ENCODE measurements at regions of chr4 and their contacts with region 1.

Region 1: DNA sequence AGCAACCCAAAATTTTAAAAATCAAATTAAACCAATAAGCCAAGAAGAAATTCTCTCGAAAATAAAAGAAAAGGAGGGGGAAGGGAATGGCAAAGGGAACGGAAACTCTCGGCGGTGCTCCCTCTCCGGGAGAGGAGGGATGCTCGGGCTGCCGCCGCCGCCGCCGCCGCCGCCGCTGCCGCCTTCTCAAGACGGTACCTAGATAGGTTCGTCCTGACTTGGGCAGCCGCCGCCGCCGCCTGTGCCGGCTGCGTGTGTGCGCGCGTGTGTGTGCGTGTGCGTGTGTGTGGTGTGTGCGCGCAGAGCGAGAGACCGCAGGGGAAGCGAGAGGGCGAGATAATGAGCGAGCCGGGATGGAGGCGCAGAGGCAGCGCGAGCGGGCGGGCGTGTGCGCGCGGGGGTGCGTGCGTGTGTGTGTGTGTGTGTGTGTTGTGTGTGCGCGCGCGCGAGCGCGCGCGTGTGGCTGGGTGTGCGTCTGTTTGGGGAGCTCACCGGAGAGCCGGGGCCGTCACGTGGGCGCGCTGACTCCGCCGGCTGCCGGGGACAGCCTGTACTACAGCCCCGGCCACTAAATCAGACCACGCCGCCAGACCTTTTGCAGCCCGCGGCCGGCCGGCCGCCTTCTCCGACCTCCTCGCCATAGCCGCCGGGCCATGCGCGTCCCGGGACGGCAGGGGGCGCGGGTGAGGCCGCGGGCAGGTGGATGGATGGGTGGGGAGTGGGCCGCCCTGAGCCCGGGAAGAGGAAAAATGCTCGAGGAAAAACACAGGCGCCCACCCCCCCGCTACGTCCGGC is 111.6 kb downstream of the DHX15 start:
- DNase-seq: peak; percentile 76
- H3K4me3 Mint-ChIP-seq: peak overlapping the region; percentile 92
- H3K27ac Mint-ChIP-seq: no peak overlapping the region
- H3K4me1 Mint-ChIP-seq: peaks cover 20% of the 10 kb centered on the region
- H3K27me3 Mint-ChIP-seq: peaks cover 40% of the 10 kb centered on the region
- CTCF ChIP-seq: peak; percentile 76

Region 2: DNA sequence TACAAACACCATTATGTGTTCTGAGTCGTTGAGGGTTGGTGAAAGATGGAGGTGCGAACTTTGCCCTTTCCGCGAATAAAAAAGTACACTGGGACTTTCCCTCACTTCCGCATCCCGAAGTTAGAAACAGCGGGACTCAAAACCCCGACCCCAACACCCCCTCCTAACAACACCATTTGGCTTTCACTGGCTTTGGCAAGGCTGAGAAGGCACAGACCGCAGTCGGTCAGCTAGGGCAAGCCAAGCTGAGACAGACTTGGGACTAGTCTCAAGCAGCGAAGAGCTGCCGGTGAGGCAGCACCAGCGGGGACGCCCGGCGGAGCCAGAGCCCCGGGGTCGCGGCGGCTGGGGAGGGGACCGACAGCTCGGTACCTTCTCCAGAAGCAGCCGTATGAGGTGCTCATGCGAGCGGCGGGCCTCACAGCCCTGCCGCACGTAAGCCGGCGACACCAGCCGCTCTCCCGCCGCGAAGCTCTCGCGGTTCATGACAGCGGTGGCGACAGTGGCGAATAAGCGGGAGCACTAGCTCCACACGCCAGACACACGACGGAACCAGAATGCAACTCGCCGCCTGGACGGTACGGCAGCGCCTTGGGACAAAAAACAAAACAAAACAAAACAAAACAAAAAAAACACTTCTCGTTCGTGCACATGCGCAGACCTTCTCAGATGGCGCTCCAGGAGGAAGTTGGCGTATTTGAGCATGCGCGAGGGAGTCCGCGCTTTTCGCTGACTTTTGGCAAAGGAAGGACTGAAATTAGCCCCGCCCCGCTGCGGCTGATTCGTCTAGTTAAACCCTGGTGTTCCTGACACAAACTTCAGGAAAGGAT is 687.4 kb after region 1 on chr4 and contains the start of gene SEPSECS:
- CTCF ChIA-PET with region 1: no interaction called
- intact Hi-C with region 1: loop called (anchors 10 kb)
- DNase-seq: peak; percentile 91
- H3K4me3 Mint-ChIP-seq: peak within 1 kb of the TSS; percentile 97
- H3K27ac Mint-ChIP-seq: peak within 1 kb of the TSS; percentile 91
- H3K4me1 Mint-ChIP-seq: peaks cover 18% of the 10 kb centered on the region
- H3K27me3 Mint-ChIP-seq: no peaks in the 10 kb centered on the region
- CTCF ChIP-seq: no peak
- total RNA-seq, gene SEPSECS: 7.5 and 9.4 TPM in 2 replicates